Natural killer cell (primary cell): ENCODE measurements at regions of chr22 and their contacts with region 1.

Region 1: DNA sequence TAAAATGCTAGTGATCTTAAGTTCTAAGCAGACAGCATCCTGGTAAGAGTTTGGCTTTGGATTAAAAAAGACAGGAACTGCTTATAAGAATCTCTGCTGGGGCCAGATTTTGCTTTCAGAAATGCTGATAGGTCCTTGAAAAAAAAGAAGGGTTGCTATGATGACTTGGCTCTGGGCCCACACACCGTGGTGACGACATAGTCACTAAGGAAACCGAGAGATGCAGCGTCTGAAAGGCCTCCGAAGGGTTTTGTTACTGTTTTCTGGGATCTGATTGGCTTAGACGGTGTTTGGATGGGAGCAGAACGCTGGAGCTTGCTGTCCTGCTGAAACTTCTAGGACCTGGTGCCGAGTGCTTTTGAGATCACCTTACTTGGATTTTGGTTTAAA is 8.4 kb downstream of the FAM118A start:
- DNase-seq: peak; percentile 79 to 97
- ATAC-seq: peak; percentile 68 to 80 (median 73)
- H3K4me3 ChIP-seq: peak overlapping the region; percentile 24
- H3K4me3 Mint-ChIP-seq: peak overlapping the region; percentile 87
- H3K27ac ChIP-seq: peak overlapping the region; percentile 99
- H3K27ac Mint-ChIP-seq: peak overlapping the region; percentile 98 to 100
- H3K4me1 ChIP-seq: peaks cover 31% of the 10 kb centered on the region
- H3K4me1 Mint-ChIP-seq: peaks cover 24 to 28% of the 10 kb centered on the region in 2 donors
- H3K27me3 ChIP-seq: no peaks in the 10 kb centered on the region
- H3K27me3 Mint-ChIP-seq: no peaks in the 10 kb centered on the region
- CTCF ChIP-seq: no peak

Region 2: DNA sequence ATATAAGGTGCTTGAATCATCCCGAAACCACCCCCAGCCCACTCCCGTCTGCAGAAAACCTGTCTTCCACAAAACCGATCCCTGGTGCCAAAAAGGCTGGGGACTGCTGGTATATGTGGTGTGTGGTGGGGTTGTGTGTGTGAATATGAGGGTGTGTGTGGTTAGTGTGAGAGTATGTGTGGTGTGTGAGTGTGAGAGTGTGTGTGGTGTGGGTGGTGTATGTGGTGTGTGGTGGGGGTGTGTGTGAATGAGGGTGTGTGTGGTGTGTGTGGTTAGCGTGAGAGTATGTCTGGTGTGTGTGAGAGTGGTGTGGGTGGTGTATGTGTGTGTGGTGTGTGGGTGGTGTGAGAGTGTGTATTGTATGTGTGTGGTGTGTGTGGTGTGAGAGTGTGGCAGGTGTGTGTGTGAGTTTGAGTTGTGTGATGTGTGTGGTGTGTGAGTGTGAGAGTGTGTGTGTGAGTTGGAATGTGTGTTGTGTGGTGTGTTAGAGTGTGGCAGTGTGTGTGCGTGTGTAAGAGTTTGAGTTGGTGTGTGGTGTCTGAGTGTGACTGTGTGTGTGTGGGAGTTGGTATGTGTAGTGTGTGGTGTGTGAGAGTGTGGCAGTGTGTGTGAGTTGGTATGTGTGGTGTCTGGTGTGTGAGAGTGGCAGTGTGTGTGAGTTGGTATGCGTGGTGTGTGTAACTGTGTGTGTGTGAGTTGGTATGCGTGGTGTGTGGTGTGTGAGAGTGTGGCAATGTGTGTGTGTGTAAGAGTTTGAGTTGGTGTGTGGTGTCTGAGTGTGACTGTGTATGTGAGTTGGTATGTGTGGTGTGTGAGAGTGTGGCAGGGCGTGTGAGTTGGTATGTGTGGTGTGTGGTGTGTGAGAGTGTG is 26.9 kb before region 1 on chr22:
- intact Hi-C with region 1: loop called (anchors 1 kb)
- DNase-seq: peak in 1 of 2 donors; percentile 54
- ATAC-seq: peak; percentile 65 to 78 (median 74)
- H3K4me3 ChIP-seq: no peak overlapping the region
- H3K4me3 Mint-ChIP-seq: no peak overlapping the region
- H3K27ac ChIP-seq: peak overlapping the region; percentile 2
- H3K27ac Mint-ChIP-seq: no peak overlapping the region
- H3K4me1 ChIP-seq: peaks cover 53% of the 10 kb centered on the region
- H3K4me1 Mint-ChIP-seq: no peaks in the 10 kb centered on the region
- H3K27me3 ChIP-seq: peaks cover 4% of the 10 kb centered on the region
- H3K27me3 Mint-ChIP-seq: peaks cover 7% of the 10 kb centered on the region in 2 donors
- CTCF ChIP-seq: no peak

Region 3: GRCh38 chr22:45366713-45367112 is 48.5 kb after region 1 on chr22:
- intact Hi-C with region 1: no loop called
- DNase-seq: no peak
- ATAC-seq: no peak
- H3K4me3 ChIP-seq: no peak overlapping the region
- H3K4me3 Mint-ChIP-seq: no peak overlapping the region
- H3K27ac ChIP-seq: no peak overlapping the region
- H3K27ac Mint-ChIP-seq: no peak overlapping the region
- H3K4me1 ChIP-seq: no peaks in the 10 kb centered on the region
- H3K4me1 Mint-ChIP-seq: no peaks in the 10 kb centered on the region
- H3K27me3 ChIP-seq: no peaks in the 10 kb centered on the region
- H3K27me3 Mint-ChIP-seq: peaks cover 3 to 9% of the 10 kb centered on the region in 2 donors
- CTCF ChIP-seq: no peak